Heart right ventricle (tissue), 16 donors: ENCODE measurements at regions of chr14 and their contacts with region 1.

Region 1: DNA sequence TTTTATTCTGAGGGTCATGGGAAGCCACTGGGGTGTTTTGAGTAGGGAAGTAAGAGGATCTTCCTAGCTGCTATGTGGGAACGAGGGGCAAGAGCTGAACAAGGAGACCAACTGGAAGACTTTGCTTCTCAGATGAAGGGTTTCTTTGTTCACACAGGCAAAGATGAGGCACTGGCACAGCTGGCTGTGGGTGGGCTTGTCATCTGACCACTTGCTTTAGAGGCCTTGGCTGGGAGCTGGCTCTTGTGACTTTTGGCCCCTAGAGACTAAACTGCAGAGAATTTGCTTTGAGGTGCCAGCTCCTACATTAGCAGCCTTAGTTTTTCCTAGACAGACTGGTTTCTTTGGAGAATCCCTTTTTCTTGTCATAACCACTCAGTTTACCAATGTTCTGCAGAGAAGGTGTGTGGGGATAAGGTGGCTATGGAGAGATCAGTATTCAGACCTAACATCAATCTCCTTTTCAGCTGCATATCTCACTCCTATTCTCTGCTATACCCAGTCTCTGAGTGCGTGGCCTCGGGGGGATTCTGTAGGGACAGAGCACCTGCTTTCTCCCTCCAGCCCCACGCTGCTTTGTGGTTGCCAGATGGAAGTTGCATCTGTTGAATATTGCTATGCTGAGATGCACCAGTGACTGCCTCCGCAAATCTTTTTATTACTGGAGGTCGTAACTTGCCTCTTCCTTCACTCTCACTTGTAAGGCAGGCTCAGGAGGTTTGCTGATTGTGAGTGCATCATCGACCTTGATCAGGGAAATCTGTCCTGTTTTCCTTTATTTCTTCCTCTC is 12.7 kb downstream of the PPP2R5C start:
- DNase-seq: no peak
- ATAC-seq: no peak
- H3K4me3 ChIP-seq: no peak overlapping the region
- H3K27ac ChIP-seq: peak overlapping the region in 1 of 10 donors; percentile 26
- H3K4me1 ChIP-seq: peaks cover 2 to 38% (median 20%) of the 10 kb centered on the region in 9 donors
- H3K27me3 ChIP-seq: peaks cover 0 to 2% (median 0%) of the 10 kb centered on the region in 7 donors
- CTCF ChIP-seq: no peak

Region 2: DNA sequence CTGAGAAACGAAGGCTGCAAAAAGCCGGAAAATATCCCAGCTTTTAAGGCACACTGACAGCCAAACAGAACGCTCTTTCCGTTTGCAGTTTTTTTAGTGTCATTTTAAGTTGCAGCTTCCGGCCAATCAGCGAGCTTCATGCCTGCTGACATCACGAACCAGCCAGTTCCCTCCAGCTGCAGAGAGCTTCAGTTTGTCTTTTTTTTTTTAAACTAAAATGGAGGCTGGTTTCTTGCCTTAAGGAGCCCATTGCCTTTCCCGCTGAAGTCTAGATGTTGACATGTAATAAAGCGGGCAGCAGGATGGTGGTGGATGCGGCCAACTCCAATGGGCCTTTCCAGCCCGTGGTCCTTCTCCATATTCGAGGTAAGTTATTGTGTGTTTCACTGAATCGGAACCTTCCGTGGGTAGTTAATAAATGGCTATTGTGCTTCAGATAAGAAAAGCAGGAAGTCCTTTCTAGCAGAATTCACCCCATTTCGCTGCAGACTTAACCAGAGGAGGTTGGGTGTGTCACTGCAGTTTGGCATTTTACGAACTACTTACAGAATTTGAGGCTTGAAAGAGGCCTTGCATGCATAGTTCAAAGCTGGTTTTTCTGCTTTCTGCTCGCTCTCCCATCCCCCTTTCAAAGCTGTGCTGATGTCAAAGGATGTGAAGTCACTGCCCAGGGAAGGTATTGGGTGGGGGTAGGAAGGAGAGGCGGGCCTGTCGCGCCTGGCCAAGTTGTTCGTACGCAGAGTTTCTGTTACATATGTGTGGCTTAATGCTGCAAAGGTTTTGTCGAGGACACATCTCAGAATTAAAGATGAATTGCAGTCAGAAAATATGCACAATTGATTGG is 35.7 kb after region 1 on chr14:
- intact Hi-C with region 1: loop called in 1 of 10 experiments (anchors 5 kb)
- DNase-seq: peak; percentile 71 to 92
- ATAC-seq: peak; percentile 93 to 97 (median 94)
- H3K4me3 ChIP-seq: peak overlapping the region; percentile 46 to 81 (median 62)
- H3K27ac ChIP-seq: peak overlapping the region; percentile 88 to 100 (median 95)
- H3K4me1 ChIP-seq: peaks cover 15 to 62% (median 56%) of the 10 kb centered on the region in 9 donors
- H3K27me3 ChIP-seq: no peaks in the 10 kb centered on the region
- CTCF ChIP-seq: no peak

Region 3: DNA sequence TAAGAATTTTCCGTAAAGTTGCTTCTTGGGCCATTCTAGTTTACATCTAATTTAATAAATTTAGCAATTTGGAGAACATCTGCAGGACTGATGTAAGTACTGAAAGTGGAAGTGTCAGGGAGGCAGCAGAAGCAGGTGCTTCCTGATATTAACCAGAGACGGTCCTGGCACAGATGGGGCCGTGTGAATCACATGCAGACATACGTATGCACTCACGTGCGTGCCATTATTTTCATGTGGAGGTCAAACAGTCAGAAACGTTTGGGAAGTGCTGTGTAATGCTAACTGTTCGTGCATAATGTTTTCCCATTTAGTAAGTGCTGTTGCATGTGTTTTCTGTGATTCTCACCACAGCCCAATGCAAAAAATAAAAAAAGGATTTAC is 102.3 kb after region 1 on chr14:
- intact Hi-C with region 1: loop called in 5 of 10 experiments (anchors 5 to 10 kb)
- DNase-seq: peak; percentile 63 to 87
- ATAC-seq: peak; percentile 75 to 94 (median 88)
- H3K4me3 ChIP-seq: peak overlapping the region in 1 of 10 donors; percentile 11
- H3K27ac ChIP-seq: peak overlapping the region in 9 of 10 donors; percentile 78 to 89 (median 83)
- H3K4me1 ChIP-seq: peaks cover 0 to 75% (median 58%) of the 10 kb centered on the region in 9 donors
- H3K27me3 ChIP-seq: no peaks in the 10 kb centered on the region
- CTCF ChIP-seq: no peak

Region 4: DNA sequence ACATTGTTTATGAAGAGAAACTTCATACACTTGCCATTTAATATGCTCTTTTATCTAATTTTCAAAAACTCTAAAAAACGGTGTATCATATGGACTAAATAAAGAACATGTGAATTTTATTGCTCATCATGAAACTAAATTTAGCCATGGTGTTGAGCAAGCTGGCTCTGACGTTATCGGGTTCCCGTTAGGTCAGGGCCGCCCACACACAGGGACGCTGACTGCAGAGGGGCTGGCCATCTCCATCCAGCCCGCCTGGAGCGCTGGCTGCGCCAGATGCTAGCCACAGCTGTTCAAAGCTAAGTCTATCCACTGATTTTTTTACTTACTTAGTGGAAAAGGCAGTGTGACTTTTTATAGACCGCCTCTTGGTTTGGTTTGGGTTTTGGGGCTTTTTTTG is 153.7 kb after region 1 on chr14:
- intact Hi-C with region 1: loop called in 1 of 10 experiments (anchors 5 kb)
- DNase-seq: peak; percentile 86 to 93
- ATAC-seq: peak; percentile 93 to 99 (median 98)
- H3K4me3 ChIP-seq: no peak overlapping the region
- H3K27ac ChIP-seq: peak overlapping the region in 9 of 10 donors; percentile 58 to 85 (median 76)
- H3K4me1 ChIP-seq: peaks cover 6 to 30% (median 26%) of the 10 kb centered on the region in 9 donors
- H3K27me3 ChIP-seq: no peaks in the 10 kb centered on the region
- CTCF ChIP-seq: no peak

Region 5: DNA sequence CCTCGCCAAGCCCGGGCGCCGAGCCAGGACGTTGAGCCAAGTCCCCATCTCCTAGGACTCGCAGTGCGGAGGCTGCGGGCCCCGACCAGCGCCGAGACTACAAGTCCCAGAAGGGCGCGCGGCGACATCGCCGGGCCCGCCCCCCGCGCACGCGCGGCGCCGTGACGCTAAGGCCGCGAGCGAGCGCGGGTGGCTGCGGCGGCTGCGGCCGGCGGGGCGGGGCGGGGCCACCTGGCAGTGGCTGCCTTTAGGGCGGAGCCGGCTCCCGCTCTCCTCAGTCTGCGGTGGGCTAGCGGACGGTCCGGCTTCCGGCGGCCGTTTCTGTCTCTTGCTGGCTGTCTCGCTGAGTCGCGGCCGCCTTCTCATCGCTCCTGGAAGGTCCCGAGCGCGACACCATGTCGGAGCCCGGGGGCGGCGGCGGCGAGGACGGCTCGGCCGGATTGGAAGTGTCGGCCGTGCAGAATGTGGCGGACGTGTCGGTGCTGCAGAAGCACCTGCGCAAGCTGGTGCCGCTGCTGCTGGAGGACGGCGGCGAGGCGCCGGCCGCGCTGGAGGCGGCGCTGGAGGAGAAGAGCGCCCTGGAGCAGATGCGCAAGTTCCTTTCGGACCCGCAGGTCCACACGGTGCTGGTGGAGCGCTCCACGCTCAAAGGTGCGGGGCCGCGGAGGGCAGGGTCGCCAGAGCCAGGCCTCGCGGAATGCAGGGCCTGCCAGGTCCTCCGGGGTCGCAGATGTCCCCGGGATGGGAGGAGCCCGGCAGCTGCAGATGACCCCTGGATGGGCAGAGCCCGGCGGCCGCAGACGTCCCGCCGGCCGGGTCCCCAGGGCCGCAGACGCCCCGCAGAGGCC is 190.3 kb after region 1 on chr14 and contains the start of gene DYNC1H1:
- intact Hi-C with region 1: loop called in 4 of 10 experiments (anchors 5 to 10 kb)
- DNase-seq: peak; percentile 93 to 97
- ATAC-seq: peak; percentile 90 to 96 (median 92)
- H3K4me3 ChIP-seq: peak within 1 kb of the TSS; percentile 83 to 100 (median 99)
- H3K27ac ChIP-seq: peak within 1 kb of the TSS; percentile 91 to 98 (median 97)
- H3K4me1 ChIP-seq: peaks cover 6 to 71% (median 54%) of the 10 kb centered on the region in 9 donors
- H3K27me3 ChIP-seq: no peaks in the 10 kb centered on the region
- CTCF ChIP-seq: no peak
- total RNA-seq, gene DYNC1H1: 413 to 777 (median 634) TPM